ENCODE measurements at regions of chr3 and their contacts with region 1.

Region 1: GRCh38 chr3:156674046-156674910 is at the start of gene TIPARP:
- DNase-seq: peak; percentile 98 to 99 (median 99)
- H3K4me3 ChIP-seq: peak within 1 kb of the TSS; percentile 84 to 99 (median 91)
- H3K27ac ChIP-seq: peak within 1 kb of the TSS; percentile 97
- H3K4me1 ChIP-seq: peaks cover 12 to 24% (median 17%) of the 10 kb centered on the region in 4 experiments
- H3K27me3 ChIP-seq: no peaks in the 10 kb centered on the region

Region 2: GRCh38 chr3:156643729-156644389 is 30.4 kb before region 1 on chr3:
- CTCF ChIA-PET with region 1: interaction called, 26 read pairs
- POLR2A ChIA-PET with region 1: interaction called, 4 read pairs
- DNase-seq: peak; percentile 92 to 97 (median 95)
- H3K4me3 ChIP-seq: peak overlapping the region in 6 of 7 experiments; percentile 8 to 60 (median 36)
- H3K27ac ChIP-seq: peak overlapping the region; percentile 76 to 88
- H3K4me1 ChIP-seq: peaks cover 16 to 45% (median 21%) of the 10 kb centered on the region in 4 experiments
- H3K27me3 ChIP-seq: no peaks in the 10 kb centered on the region

Region 3: GRCh38 chr3:156654834-156655233 is 19.4 kb before region 1 on chr3:
- CTCF ChIA-PET with region 1: interaction called, 13 read pairs
- POLR2A ChIA-PET with region 1: no interaction called
- DNase-seq: no peak
- H3K4me3 ChIP-seq: no peak overlapping the region
- H3K27ac ChIP-seq: no peak overlapping the region
- H3K4me1 ChIP-seq: peaks cover 0 to 5% (median under 1%) of the 10 kb centered on the region in 4 experiments
- H3K27me3 ChIP-seq: no peaks in the 10 kb centered on the region

Region 4: GRCh38 chr3:156816800-156817645 is 142.7 kb after region 1 on chr3:
- CTCF ChIA-PET with region 1: no interaction called
- POLR2A ChIA-PET with region 1: no interaction called
- DNase-seq: peak; percentile 92 to 93 (median 93)
- H3K4me3 ChIP-seq: peak overlapping the region; percentile 30 to 81 (median 66)
- H3K27ac ChIP-seq: peak overlapping the region; percentile 81 to 90
- H3K4me1 ChIP-seq: peaks cover 2 to 56% (median 23%) of the 10 kb centered on the region in 4 experiments
- H3K27me3 ChIP-seq: no peaks in the 10 kb centered on the region

Region 5: GRCh38 chr3:157081681-157082210 is 407.5 kb after region 1 on chr3:
- CTCF ChIA-PET with region 1: interaction called, 27 read pairs
- POLR2A ChIA-PET with region 1: interaction called, 3 read pairs
- DNase-seq: peak; percentile 77 to 87 (median 85)
- H3K4me3 ChIP-seq: peak overlapping the region in 1 of 7 experiments; percentile 8
- H3K27ac ChIP-seq: no peak overlapping the region
- H3K4me1 ChIP-seq: peaks cover 0 to 4% (median 2%) of the 10 kb centered on the region in 4 experiments
- H3K27me3 ChIP-seq: no peaks in the 10 kb centered on the region